ENCODE measurements at regions of chr5 and their contacts with region 1.

Region 1: GRCh38 chr5:35089334-35090314 is 41.9 kb upstream of the AGXT2 start:
- DNase-seq: peak; percentile 22
- H3K4me3 Mint-ChIP-seq: no peak overlapping the region
- H3K27ac Mint-ChIP-seq: no peak overlapping the region
- H3K4me1 Mint-ChIP-seq: no peaks in the 10 kb centered on the region
- H3K27me3 Mint-ChIP-seq: peaks cover 4% of the 10 kb centered on the region

Region 2: DNA sequence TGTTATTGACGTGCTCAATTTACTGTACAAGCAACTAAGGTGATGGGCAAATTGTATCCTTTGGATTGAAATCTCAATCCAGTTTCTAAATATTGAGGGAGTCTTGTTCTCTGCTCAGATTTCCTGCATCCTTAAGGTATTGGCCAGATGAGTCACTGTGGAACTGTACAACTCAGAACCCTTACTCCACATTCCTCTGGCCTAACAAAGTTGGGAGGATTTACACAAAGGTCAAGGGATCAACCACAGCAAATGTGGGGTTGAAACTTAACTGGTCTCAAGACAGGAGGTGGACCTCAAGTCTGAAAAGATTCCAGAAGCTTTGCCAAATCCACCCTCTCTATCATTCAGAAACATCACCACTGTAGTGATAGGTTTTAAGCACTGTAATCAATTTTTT is 39.7 kb after region 1 on chr5:
- intact Hi-C with region 1: no loop called
- DNase-seq: no peak
- H3K4me3 Mint-ChIP-seq: no peak overlapping the region
- H3K27ac Mint-ChIP-seq: no peak overlapping the region
- H3K4me1 Mint-ChIP-seq: peaks cover 16% of the 10 kb centered on the region
- H3K27me3 Mint-ChIP-seq: peaks cover 45% of the 10 kb centered on the region

Region 3: DNA sequence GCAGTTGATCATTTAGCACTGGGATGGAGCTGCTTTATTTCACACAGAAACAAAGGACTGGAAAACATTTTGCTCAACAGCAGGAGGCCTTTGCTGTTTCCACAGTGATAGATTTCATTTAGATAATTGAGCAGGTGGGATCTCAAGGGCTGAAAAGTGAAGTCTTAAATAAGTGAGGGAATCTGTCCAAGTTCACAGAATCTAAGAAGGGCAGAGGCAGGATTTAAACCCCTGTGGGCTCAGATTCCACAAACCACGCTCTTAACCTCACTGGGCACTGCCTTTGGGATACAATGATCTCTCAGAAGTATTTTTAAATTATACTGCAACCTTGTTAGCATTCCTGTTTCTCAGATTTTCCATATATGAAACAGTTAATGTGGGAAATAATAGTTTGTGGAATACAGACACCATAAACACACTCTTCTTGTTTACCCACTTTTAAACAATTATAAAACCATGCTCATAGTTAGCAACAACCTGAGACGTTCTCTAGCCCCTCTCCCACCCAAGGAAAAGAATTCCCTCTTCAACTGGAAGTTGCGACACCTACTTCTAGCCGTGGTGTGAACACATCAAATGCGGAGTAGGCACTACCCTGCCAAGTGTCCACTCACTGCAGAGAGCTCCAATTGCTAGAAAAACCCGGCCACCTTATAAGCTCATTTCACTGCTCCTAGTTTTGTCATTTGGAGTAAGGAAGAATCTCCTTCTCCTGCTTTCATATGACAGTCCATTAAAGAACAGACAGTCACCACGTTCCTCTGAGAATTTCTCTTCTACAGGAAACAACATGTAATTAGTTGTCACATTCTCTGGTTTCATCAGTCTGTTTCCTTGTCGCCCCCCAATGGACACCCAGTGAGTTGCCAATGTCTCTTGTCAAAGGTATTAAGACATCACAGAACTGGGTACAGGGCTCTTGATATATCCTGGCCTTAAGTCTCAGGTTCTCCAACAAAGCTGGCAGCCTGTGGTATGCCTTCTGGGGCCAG is 93.2 kb after region 1 on chr5:
- intact Hi-C with region 1: loop called (anchors 1 kb)
- DNase-seq: no peak
- H3K4me3 Mint-ChIP-seq: no peak overlapping the region
- H3K27ac Mint-ChIP-seq: no peak overlapping the region
- H3K4me1 Mint-ChIP-seq: no peaks in the 10 kb centered on the region
- H3K27me3 Mint-ChIP-seq: peaks cover 1% of the 10 kb centered on the region

Region 4: DNA sequence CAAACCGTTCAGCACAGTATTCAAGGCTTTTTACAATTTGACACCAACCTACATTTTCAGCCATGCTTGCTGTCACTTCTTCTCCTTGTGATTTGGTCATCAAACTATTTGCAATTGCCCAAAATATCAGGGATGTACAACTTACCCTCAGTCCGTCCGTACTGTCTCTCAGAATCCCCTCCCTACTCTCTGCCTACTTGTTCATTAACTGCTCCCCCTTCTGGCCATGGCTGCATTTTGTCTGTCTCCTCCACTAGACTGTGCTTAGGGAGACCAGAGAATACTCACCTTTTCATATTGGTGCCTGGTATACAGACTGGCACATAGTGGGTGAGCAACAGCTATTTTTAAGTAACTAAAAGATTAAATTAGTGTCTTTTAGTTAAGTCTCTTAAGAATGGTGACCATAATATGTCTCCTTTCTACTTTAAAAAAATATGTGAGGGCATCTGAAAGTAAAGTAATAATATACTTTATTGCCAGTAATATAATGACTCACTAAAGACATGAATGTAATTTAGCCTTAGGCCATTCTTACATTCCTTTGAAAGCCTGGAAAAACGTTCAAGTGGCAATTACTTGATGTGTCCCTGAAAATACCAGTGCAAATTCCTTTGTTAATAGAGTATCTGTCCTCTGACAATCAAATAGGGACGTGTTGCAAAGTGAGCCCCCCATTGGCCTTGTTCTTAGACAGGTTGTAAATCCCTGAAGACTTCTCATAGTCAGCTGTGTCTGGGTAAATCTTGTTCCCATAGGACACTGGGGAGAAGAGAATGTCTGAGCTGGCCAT is 112.9 kb after region 1 on chr5:
- intact Hi-C with region 1: loop called (anchors 5 kb)
- DNase-seq: no peak
- H3K4me3 Mint-ChIP-seq: no peak overlapping the region
- H3K27ac Mint-ChIP-seq: no peak overlapping the region
- H3K4me1 Mint-ChIP-seq: no peaks in the 10 kb centered on the region
- H3K27me3 Mint-ChIP-seq: peaks cover 15% of the 10 kb centered on the region

Region 5: DNA sequence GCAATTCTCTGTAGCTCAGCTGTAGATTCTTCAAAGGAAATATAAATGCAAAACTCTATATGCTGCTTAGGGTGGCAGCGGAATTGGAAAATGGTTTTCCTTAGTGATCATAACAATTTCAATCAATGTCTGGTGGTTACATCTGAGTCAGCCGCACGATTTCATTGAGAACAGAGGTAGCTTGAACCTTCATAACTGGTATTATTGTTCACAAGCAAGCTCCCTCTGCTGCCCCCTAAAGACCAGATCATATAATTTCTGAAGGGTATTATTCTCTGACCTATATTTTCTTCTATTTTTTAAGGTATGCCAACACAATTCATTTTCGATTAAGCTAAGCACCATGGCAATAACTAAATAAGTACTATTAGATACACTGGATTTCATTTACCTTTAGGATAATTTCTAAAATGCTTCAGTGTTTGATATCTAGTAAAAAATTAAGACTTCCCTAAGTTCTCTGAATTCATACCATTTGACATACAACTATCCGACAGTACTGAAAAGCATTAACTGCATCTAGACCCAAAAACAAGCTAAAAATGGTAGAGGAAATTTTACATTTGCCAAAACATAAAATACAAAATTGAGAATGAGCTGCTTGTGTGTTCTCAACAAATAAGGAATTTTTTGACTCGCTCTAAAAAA is 346.9 kb after region 1 on chr5:
- intact Hi-C with region 1: loop called (anchors 2 kb)
- DNase-seq: no peak
- H3K4me3 Mint-ChIP-seq: no peak overlapping the region
- H3K27ac Mint-ChIP-seq: no peak overlapping the region
- H3K4me1 Mint-ChIP-seq: no peaks in the 10 kb centered on the region
- H3K27me3 Mint-ChIP-seq: peaks cover 34% of the 10 kb centered on the region